ENCODE measurements at regions of chr4 and their contacts with region 1.

Region 1: GRCh38 chr4:74665377-74665776 is 128.9 kb downstream of the BTC start:
- DNase-seq: peak; percentile 80
- ATAC-seq: peak; percentile 81
- H3K4me3 ChIP-seq: peak overlapping the region in 1 of 2 experiments; percentile 22; a peak in 2 of 4 replicates
- H3K27ac ChIP-seq: peak overlapping the region; percentile 93
- H3K4me1 ChIP-seq: peaks cover 86 to 99% of the 10 kb centered on the region in 2 experiments
- H3K27me3 ChIP-seq: no peaks in the 10 kb centered on the region
- CTCF ChIP-seq: no peak
- POLR2A ChIP-seq: no peak
- RAD21 ChIP-seq: no peak

Region 2: GRCh38 chr4:74632634-74633033 is 32.7 kb before region 1 on chr4:
- CTCF ChIA-PET with region 1: interaction called, 3 read pairs
- POLR2A ChIA-PET with region 1: interaction called, 29 read pairs
- RAD21 ChIA-PET with region 1: interaction called in 1 of 2 experiments, 5 read pairs
- intact Hi-C with region 1: no loop called
- DNase-seq: peak; percentile 95
- ATAC-seq: peak; percentile 64
- H3K4me3 ChIP-seq: peak overlapping the region in 1 of 2 experiments; percentile 9; a peak in 1 of 4 replicates
- H3K27ac ChIP-seq: peak overlapping the region; percentile 94
- H3K4me1 ChIP-seq: peaks cover 86 to 100% of the 10 kb centered on the region in 2 experiments
- H3K27me3 ChIP-seq: no peaks in the 10 kb centered on the region
- CTCF ChIP-seq: no peak
- POLR2A ChIP-seq: no peak
- RAD21 ChIP-seq: no peak

Region 3: GRCh38 chr4:74640111-74640903 is 25.1 kb before region 1 on chr4:
- CTCF ChIA-PET with region 1: interaction called, 3 read pairs
- POLR2A ChIA-PET with region 1: interaction called, 29 read pairs
- RAD21 ChIA-PET with region 1: no interaction called
- intact Hi-C with region 1: no loop called
- DNase-seq: no peak
- ATAC-seq: peak; percentile 29; the same call in 1 of the 2 replicates
- H3K4me3 ChIP-seq: no peak overlapping the region
- H3K27ac ChIP-seq: peak overlapping the region; percentile 94
- H3K4me1 ChIP-seq: peaks cover 73 to 77% of the 10 kb centered on the region in 2 experiments
- H3K27me3 ChIP-seq: no peaks in the 10 kb centered on the region
- CTCF ChIP-seq: no peak
- POLR2A ChIP-seq: peak; percentile 55
- RAD21 ChIP-seq: no peak

Region 4: DNA sequence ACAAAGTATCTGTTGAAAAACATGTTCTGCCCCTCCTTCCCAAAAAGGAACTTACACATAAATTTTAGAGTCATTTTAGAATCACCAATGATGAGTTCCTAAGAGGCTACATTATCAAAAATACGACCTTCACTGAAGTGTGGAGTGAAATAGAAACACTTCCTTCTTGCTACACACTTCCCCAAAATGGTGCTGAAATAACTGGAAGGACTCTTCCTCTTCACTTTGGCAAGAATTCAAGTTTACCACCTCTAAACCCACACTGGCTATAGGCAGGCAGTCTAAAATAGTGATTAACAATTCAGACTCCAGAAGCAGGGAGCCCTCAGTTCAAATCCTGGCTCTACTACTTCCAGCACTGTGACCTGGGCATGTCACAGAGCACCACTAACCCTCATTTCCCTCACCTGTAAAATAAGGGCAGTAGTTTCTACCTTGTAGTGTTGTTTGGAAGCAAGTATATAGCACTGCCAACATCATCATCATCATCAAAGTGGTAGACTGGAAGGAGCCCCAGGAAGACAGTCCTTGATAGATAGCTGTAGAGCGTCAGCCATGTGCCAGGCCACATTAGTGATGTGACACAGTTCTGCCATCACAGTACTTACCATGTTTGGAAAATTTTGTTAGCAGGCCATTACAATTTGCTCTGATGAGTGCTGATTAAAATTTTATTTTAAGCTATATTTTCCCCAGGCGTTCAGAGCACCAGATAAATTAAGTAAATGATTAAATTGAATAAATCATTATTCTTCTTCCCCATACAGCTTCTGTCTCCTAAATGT is 370.9 kb after region 1 on chr4:
- CTCF ChIA-PET with region 1: no interaction called
- POLR2A ChIA-PET with region 1: no interaction called
- RAD21 ChIA-PET with region 1: no interaction called
- intact Hi-C with region 1: no loop called
- DNase-seq: no peak
- ATAC-seq: no peak
- H3K4me3 ChIP-seq: no peak overlapping the region
- H3K27ac ChIP-seq: no peak overlapping the region
- H3K4me1 ChIP-seq: no peaks in the 10 kb centered on the region
- H3K27me3 ChIP-seq: no peaks in the 10 kb centered on the region
- CTCF ChIP-seq: no peak
- POLR2A ChIP-seq: no peak
- RAD21 ChIP-seq: no peak

Region 5: DNA sequence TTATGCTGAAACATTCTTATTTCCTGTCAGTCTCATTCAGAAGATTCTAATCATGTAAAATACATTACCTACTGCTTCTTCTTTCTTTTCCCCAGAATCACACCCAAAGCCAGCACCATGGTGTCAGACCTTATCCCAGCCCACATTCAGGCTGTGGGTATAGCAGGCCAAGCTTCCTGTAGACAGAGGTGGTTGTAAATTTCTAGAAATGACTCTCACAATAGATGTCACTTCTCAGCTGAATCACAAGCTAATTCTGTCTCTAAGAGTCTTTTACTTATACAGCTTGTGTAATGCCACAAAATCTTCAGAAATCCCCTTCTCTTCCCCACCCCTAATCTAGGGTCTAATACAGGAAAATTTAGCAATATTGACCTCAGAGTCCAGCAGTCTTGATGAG is 507.2 kb after region 1 on chr4:
- CTCF ChIA-PET with region 1: no interaction called
- POLR2A ChIA-PET with region 1: no interaction called
- RAD21 ChIA-PET with region 1: no interaction called
- intact Hi-C with region 1: no loop called
- DNase-seq: no peak
- ATAC-seq: no peak
- H3K4me3 ChIP-seq: no peak overlapping the region
- H3K27ac ChIP-seq: no peak overlapping the region
- H3K4me1 ChIP-seq: no peaks in the 10 kb centered on the region
- H3K27me3 ChIP-seq: no peaks in the 10 kb centered on the region
- CTCF ChIP-seq: no peak
- POLR2A ChIP-seq: no peak
- RAD21 ChIP-seq: no peak